ENCODE measurements at regions of chr9 and their contacts with region 1.

Region 1: DNA sequence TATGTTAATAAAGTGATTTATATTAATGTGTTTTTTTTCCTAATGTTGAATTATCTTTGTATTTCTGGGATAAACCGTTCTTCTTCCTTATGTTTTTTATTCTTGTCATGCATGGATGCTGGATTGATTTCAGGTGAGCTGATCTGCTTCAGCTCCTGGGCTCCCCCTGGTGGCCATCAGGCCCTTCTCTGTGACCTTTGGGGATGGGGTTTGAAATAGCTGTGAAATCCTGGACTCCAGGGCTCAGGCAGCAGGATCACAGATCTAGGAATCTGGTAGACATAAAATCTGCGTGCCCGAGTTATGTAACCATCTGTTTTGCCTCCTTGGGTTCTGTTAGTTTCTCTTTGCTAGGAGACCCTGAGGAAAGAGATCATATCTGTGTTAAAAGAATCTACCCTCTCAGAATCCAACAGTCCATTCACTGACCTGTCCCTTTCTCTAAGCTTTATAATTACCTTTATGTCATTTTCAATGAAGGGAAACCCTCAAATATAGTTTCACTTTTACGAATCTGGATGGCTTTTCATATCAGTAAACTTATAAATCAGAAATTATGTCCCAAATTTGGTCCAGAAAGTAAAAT is 12.2 kb upstream of the OR13J1 start:
- DNase-seq: peak; percentile 80
- H3K4me3 Mint-ChIP-seq: no peak overlapping the region
- H3K27ac Mint-ChIP-seq: no peak overlapping the region
- H3K4me1 Mint-ChIP-seq: peaks cover 6% of the 10 kb centered on the region
- H3K27me3 Mint-ChIP-seq: peaks cover 16% of the 10 kb centered on the region
- CTCF ChIP-seq: peak; percentile 95

Region 2: DNA sequence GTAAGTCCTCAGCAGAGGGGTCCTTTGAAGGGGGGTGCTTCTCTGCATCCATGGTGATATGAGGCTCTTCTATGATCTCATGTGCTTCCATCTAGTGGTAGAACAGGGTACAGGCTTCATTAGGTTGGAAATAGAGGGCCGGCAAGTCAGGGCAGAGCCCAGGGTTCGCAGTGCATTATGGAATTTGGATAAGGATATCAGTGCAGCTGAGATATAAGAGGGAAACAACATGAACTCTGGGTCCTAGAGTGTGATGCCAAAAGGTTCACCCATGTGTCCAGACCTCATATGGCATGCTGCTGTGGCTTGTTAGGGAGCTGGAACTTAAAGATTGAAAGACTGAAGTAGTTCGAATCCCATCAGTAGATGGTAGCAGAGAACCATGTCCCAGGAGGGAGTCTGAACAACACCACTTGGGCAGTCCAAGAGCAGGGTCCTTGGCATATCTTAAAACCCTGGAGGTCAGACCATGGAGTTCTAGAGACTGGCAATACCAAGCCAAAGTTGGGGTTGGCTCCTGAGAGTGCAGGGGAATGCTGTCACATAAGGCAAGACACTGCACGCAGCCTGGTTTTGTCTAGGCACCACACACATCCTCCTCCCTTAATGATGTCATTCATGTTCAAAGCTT is 56.2 kb before region 1 on chr9:
- CTCF ChIA-PET with region 1: interaction called, 11 read pairs
- POLR2A ChIA-PET with region 1: interaction called, 5 read pairs
- intact Hi-C with region 1: loop called (anchors 1 kb)
- DNase-seq: peak; percentile 73
- H3K4me3 Mint-ChIP-seq: no peak overlapping the region
- H3K27ac Mint-ChIP-seq: peak overlapping the region; percentile 46
- H3K4me1 Mint-ChIP-seq: peaks cover 40% of the 10 kb centered on the region
- H3K27me3 Mint-ChIP-seq: no peaks in the 10 kb centered on the region
- CTCF ChIP-seq: peak; percentile 60

Region 3: GRCh38 chr9:35847792-35848572 is 34.4 kb before region 1 on chr9:
- CTCF ChIA-PET with region 1: interaction called, 5 read pairs
- POLR2A ChIA-PET with region 1: no interaction called
- intact Hi-C with region 1: loop called (anchors 2 kb)
- DNase-seq: peak; percentile 60
- H3K4me3 Mint-ChIP-seq: no peak overlapping the region
- H3K27ac Mint-ChIP-seq: no peak overlapping the region
- H3K4me1 Mint-ChIP-seq: peaks cover 28% of the 10 kb centered on the region
- H3K27me3 Mint-ChIP-seq: no peaks in the 10 kb centered on the region
- CTCF ChIP-seq: no peak

Region 4: GRCh38 chr9:36078051-36078450 is 195.7 kb after region 1 on chr9:
- CTCF ChIA-PET with region 1: no interaction called
- POLR2A ChIA-PET with region 1: no interaction called
- intact Hi-C with region 1: no loop called
- DNase-seq: no peak
- H3K4me3 Mint-ChIP-seq: no peak overlapping the region
- H3K27ac Mint-ChIP-seq: no peak overlapping the region
- H3K4me1 Mint-ChIP-seq: peaks cover 19% of the 10 kb centered on the region
- H3K27me3 Mint-ChIP-seq: no peaks in the 10 kb centered on the region
- CTCF ChIP-seq: no peak